CD4-positive, alpha-beta T cell (primary cell): ENCODE measurements at regions of chr2 and their contacts with region 1.

Region 1: GRCh38 chr2:239257511-239257937 is 143.3 kb downstream of the HDAC4 start:
- DNase-seq: peak in 3 of 14 experiments; percentile 47 to 59 (median 48)
- ATAC-seq: peak; percentile 35
- H3K4me3 ChIP-seq: no peak overlapping the region
- H3K4me3 Mint-ChIP-seq: peak overlapping the region; percentile 62
- H3K27ac ChIP-seq: no peak overlapping the region
- H3K27ac Mint-ChIP-seq: peak overlapping the region; percentile 85
- H3K4me1 ChIP-seq: peaks cover 61% of the 10 kb centered on the region
- H3K4me1 Mint-ChIP-seq: peaks cover 94% of the 10 kb centered on the region
- H3K27me3 ChIP-seq: no peaks in the 10 kb centered on the region
- H3K27me3 Mint-ChIP-seq: no peaks in the 10 kb centered on the region
- CTCF ChIP-seq: no peak

Region 2: GRCh38 chr2:239169311-239170048 is 88.0 kb before region 1 on chr2:
- CTCF ChIA-PET with region 1: no interaction called
- POLR2A ChIA-PET with region 1: no interaction called
- intact Hi-C with region 1: no loop called
- DNase-seq: peak in 1 of 14 experiments; percentile 20
- ATAC-seq: no peak
- H3K4me3 ChIP-seq: no peak overlapping the region
- H3K4me3 Mint-ChIP-seq: no peak overlapping the region
- H3K27ac ChIP-seq: no peak overlapping the region
- H3K27ac Mint-ChIP-seq: no peak overlapping the region
- H3K4me1 ChIP-seq: peaks cover 8% of the 10 kb centered on the region
- H3K4me1 Mint-ChIP-seq: peaks cover 9% of the 10 kb centered on the region
- H3K27me3 ChIP-seq: no peaks in the 10 kb centered on the region
- H3K27me3 Mint-ChIP-seq: no peaks in the 10 kb centered on the region
- CTCF ChIP-seq: no peak

Region 3: DNA sequence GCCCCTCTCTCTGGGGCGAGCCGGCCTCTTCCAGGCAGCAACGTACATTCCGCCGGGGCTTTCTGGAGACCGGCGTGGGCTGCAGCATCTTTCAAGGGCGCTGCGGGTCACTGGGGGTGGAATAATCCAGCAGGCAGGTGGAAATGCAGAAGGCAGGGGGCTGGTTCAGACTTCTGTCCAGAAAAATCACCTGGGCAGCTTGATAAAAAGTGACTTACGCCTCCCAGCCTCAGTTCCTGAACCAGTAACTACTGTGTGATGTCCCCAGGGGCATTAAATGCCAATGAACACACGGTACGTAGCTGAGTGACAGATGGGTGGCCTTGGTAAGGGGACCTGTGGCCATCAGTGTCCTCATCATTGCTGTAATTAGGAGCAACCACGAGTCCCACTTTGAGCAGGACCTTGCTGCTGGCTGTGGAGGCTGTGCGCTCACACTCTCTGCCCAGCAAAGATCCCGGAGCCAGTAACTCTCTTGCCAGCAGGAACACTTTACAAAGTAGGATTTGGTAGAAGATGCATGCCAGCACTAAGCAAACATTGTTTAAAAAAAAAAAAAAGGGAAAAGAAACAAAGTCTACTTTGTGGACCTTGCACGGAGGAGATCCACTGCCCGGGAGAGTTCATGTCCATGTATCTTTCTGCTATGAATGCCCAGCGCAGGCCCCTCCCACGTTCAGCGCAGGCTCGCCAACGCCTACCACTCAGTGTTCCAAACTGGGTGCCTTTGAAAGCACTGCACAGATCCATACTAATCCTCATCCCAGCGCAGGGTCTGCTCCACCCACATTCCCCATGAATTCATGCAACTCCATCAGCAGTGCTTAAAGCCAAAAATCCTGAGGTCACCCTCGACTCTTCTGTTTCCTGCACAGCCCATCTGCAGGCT is 34.0 kb before region 1 on chr2:
- CTCF ChIA-PET with region 1: no interaction called
- POLR2A ChIA-PET with region 1: no interaction called
- intact Hi-C with region 1: loop called (anchors 5 kb)
- DNase-seq: no peak
- ATAC-seq: no peak
- H3K4me3 ChIP-seq: no peak overlapping the region
- H3K4me3 Mint-ChIP-seq: peak overlapping the region; percentile 45
- H3K27ac ChIP-seq: peak overlapping the region in 1 of 2 donors; percentile 35
- H3K27ac Mint-ChIP-seq: peak overlapping the region; percentile 84
- H3K4me1 ChIP-seq: peaks cover 63% of the 10 kb centered on the region
- H3K4me1 Mint-ChIP-seq: peaks cover 88% of the 10 kb centered on the region
- H3K27me3 ChIP-seq: no peaks in the 10 kb centered on the region
- H3K27me3 Mint-ChIP-seq: no peaks in the 10 kb centered on the region
- CTCF ChIP-seq: no peak